WTC11 (cell line): ENCODE measurements at regions of chr20 and their contacts with region 1.

Region 1: DNA sequence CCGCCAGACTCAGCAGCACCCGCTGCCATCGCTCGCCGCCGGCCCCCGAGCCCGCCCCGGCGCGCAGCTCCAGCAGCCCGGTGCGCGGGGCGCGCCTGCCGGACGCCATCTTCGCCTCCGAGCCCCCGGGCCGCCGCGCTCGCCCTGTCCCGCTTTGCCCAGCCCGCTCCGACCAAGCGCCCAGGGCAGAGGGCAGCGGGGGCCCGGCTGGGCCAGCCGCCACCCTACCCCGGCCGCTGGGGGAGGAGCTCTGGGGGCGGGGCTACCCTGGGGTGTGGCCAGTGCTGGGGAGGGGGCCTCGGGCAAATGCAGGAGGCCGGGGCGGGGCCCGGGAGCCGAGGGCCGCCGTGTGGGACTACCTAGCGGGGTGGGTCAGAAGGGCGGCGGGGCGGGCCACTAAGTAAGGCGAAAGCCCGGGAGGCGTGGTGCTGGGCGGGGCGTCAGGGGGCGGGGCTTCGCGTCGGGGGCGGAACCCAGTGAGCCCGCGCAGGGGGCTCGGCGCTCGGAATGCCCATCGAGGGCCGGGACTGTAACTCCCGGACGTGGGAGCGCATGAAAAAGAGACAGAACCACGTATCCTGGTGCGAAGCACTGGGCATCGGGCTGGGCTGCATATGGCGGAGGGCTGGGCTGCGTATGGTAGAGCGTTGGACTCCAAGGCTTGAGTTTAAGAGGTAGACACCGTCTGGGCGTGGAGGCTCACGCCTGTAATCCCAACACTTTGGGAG is at the start of gene SNTA1:
- DNase-seq: peak; percentile 97
- ATAC-seq: peak; percentile 94
- H3K4me3 Mint-ChIP-seq: peak within 1 kb of the TSS; percentile 86
- H3K27ac Mint-ChIP-seq: peak within 1 kb of the TSS; percentile 80
- H3K4me1 Mint-ChIP-seq: peaks cover 12% of the 10 kb centered on the region
- H3K27me3 Mint-ChIP-seq: peaks cover 42% of the 10 kb centered on the region
- CTCF ChIP-seq: no peak
- total RNA-seq, gene SNTA1: 5.3 to 6.3 TPM (median 6.2 TPM) in 3 replicates

Region 2: DNA sequence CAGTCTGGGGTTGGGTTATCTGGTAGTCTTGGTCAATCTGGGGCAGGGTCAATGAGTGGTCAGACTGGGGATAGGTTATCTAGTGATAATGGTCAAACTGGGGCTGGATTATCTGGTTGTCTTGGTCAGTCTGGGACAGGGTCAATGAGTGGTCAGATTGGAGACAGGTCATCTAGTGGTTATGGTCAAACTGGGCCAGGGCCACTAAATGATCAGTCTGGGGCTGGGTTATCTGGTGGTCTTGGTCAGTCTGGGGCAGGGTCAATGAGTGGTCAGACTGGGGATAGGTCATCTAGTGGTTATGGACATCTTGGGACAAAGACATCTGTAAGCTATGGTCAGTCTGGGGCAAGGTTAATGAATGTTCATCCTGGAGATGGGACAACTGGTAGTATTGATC is 304.2 kb before region 1 on chr20:
- CTCF ChIA-PET with region 1: no interaction called
- POLR2A ChIA-PET with region 1: no interaction called
- DNase-seq: no peak
- ATAC-seq: no peak
- H3K4me3 Mint-ChIP-seq: no peak overlapping the region
- H3K27ac Mint-ChIP-seq: no peak overlapping the region
- H3K4me1 Mint-ChIP-seq: no peaks in the 10 kb centered on the region
- H3K27me3 Mint-ChIP-seq: peaks cover 21% of the 10 kb centered on the region
- CTCF ChIP-seq: no peak

Region 3: DNA sequence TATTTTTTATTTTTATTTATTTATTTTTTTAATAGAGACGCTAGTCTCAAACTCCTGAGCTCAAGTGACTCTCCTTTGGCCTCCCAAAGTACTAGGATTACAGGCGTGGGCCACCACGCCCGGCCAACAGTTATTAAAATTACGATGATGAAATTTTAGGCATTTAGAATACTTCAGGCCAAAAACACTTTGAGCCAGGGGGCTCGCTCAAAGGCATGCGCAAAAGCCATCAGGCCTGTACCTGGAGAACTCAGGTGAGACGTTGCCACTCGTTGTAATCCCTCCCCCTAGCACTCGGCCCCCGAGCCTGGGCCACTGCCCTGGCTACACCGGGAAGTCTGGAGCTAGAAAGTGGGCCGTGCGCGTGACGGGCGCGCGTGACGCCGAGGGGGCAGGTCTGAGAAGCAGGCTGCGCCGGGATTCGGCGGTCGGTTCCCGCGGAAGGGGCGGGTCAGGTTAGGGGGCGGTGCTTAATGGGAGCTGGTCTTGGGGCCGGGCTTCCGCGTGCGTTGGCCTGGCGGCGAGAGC is 45.9 kb after region 1 on chr20:
- CTCF ChIA-PET with region 1: interaction called, 13 read pairs
- POLR2A ChIA-PET with region 1: no interaction called
- DNase-seq: peak; percentile 98
- ATAC-seq: peak; percentile 96
- H3K4me3 Mint-ChIP-seq: peak overlapping the region; percentile 61
- H3K27ac Mint-ChIP-seq: peak overlapping the region; percentile 76
- H3K4me1 Mint-ChIP-seq: peaks cover 9% of the 10 kb centered on the region
- H3K27me3 Mint-ChIP-seq: no peaks in the 10 kb centered on the region
- CTCF ChIP-seq: no peak